WTC11 (cell line): ENCODE measurements at regions of chr1 and their contacts with region 1.

Region 1: DNA sequence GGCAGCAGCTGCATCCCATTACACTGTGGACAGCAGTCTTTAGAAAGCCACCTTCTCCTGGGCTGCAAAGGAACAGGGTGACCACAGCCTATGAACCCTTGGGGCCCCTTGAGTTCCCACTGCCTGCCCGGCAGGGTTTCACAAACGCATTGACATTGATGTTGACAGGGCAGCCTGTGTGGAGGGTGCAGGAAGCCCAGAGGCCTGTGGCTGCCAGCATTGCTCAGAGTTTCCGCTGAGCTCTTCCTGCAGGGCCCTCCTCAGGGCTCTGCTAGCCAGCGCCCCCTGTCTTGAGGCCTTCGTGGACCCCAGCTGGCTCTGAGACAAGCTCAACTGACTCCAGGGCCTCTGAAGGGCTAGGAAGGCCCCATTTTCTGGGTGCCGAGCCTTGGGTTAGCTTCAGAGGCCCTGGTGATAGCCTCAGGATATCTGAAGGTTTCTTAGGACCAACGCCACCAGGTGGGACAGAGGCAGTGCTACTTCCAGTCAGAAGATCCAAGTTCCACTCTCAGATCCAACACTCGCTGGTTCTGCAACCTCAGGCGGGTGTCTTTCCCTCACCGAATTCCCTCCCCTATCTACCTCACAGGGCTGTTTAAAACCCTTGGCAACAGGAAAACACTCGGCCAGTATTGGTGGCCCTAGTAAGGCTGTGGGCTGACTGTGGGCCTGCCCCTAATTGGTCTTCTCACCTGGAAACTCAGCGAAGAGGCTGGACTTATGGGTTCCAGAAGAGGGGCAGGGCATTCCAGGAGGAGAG is 27.2 kb upstream of the EPS8L3 start:
- DNase-seq: peak; percentile 53
- ATAC-seq: peak; percentile 19
- H3K4me3 Mint-ChIP-seq: no peak overlapping the region
- H3K27ac Mint-ChIP-seq: no peak overlapping the region
- H3K4me1 Mint-ChIP-seq: peaks cover 34% of the 10 kb centered on the region
- H3K27me3 Mint-ChIP-seq: peaks cover 4% of the 10 kb centered on the region; the same call in 1 of the 2 replicates
- CTCF ChIP-seq: no peak

Region 2: GRCh38 chr1:109732390-109732881 is 58.5 kb before region 1 on chr1:
- CTCF ChIA-PET with region 1: no interaction called
- POLR2A ChIA-PET with region 1: no interaction called
- DNase-seq: no peak
- ATAC-seq: no peak
- H3K4me3 Mint-ChIP-seq: no peak overlapping the region
- H3K27ac Mint-ChIP-seq: no peak overlapping the region
- H3K4me1 Mint-ChIP-seq: peaks cover 13% of the 10 kb centered on the region
- H3K27me3 Mint-ChIP-seq: peaks cover 37% of the 10 kb centered on the region
- CTCF ChIP-seq: no peak

Region 3: DNA sequence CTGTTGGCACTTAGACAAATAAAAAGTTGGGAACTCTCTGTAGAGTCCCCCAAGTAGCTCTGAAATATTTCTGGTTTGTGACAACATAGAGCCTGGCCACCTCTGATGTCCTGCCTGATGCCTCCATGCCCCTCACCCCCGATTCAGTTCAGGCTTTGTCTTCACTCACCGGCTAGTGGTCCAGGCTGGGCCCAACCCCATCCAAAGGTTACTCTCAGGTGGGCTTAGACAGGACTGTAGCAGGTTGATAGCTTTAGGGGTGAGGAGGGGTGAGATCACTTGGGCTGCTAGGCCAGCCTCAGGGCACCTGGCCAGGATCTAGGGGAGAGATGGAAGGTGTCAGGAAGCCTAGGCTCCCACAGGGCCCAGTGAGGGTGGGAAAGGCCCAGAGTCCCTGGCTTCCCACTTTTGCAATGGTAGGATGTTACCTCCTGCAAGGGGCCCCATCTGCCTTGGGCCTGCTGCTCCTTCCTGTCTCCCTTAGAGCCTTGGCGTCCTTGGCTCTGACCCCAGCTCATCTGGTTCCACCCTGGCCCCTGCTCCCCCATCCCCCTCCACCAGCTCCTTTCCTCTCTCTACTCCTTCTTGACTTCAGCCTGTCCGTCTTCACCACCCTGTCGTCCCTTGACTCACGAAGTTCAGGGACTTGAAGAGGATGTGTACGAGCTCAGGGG is 33.9 kb before region 1 on chr1:
- CTCF ChIA-PET with region 1: no interaction called
- POLR2A ChIA-PET with region 1: no interaction called
- DNase-seq: no peak
- ATAC-seq: no peak
- H3K4me3 Mint-ChIP-seq: no peak overlapping the region
- H3K27ac Mint-ChIP-seq: no peak overlapping the region
- H3K4me1 Mint-ChIP-seq: 0 out of 2 replicates have a peak, but pooled peaks cover 2% of the 10 kb centered on the region
- H3K27me3 Mint-ChIP-seq: no peaks in the 10 kb centered on the region; the same call in 1 of the 2 replicates
- CTCF ChIP-seq: no peak

Region 4: GRCh38 chr1:109773146-109773899 is 17.6 kb before region 1 on chr1:
- CTCF ChIA-PET with region 1: interaction called, 64 read pairs
- POLR2A ChIA-PET with region 1: no interaction called
- DNase-seq: peak; percentile 73
- ATAC-seq: peak; percentile 83
- H3K4me3 Mint-ChIP-seq: no peak overlapping the region
- H3K27ac Mint-ChIP-seq: no peak overlapping the region
- H3K4me1 Mint-ChIP-seq: peaks cover 5% of the 10 kb centered on the region
- H3K27me3 Mint-ChIP-seq: peaks cover 7% of the 10 kb centered on the region
- CTCF ChIP-seq: peak; percentile 38; the same call in 1 of the 2 replicates

Region 5: GRCh38 chr1:109827466-109827865 is 36.6 kb after region 1 on chr1:
- CTCF ChIA-PET with region 1: interaction called, 11 read pairs
- POLR2A ChIA-PET with region 1: no interaction called
- DNase-seq: no peak
- ATAC-seq: no peak
- H3K4me3 Mint-ChIP-seq: no peak overlapping the region
- H3K27ac Mint-ChIP-seq: no peak overlapping the region
- H3K4me1 Mint-ChIP-seq: peaks cover 22% of the 10 kb centered on the region
- H3K27me3 Mint-ChIP-seq: peaks cover 3% of the 10 kb centered on the region; the same call in 1 of the 2 replicates
- CTCF ChIP-seq: no peak

Region 6: DNA sequence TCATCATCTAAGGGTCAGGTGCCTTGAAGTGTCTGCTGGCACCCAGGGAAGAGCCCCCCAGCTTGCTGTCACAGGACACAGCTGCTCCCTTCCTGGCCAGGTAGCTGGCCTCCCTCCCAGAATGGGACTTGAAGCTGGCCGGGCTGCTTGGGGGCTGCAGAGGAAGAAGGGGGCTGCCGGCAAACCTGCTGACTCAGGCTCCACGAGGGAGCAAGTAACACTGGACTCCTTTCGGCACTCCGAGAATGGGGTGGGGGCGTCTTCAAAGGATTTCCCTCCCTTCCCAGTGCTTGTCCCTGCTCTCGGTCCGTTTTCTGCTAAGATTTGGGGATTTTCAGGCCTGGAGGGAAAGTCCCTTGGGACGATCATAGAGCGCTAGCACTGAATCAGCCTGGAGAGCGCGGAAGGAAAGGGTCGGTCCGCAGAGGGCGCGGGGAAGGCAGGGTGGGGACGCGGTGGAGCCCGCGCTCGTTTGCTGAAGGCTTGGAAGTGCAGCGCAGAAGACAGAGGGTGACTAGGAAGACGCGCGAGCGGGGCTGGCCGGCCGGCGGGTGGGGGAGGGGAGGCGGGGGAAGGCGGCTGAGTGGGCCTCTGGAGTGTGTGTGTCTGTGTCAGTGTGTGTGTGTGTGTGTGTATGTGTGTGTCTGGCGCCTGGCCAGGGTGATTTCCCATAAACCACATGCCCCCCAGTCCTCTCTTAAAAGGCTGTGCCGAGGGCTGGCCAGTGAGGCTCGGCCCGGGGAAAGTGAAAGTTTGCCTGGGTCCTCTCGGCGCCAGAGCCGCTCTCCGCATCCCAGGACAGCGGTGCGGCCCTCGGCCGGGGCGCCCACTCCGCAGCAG is 119.4 kb after region 1 on chr1 and contains the start of gene CSF1:
- CTCF ChIA-PET with region 1: interaction called, 13 read pairs
- POLR2A ChIA-PET with region 1: interaction called, 3 read pairs
- DNase-seq: peak; percentile 55
- ATAC-seq: peak; percentile 62
- H3K4me3 Mint-ChIP-seq: peak within 1 kb of the TSS; percentile 82
- H3K27ac Mint-ChIP-seq: no peak within 1 kb of the TSS
- H3K4me1 Mint-ChIP-seq: peaks cover 31% of the 10 kb centered on the region
- H3K27me3 Mint-ChIP-seq: peaks cover 56% of the 10 kb centered on the region
- CTCF ChIP-seq: no peak
- total RNA-seq, gene CSF1: 2.5 to 3.3 TPM (median 3.0 TPM) in 3 replicates

Region 7: DNA sequence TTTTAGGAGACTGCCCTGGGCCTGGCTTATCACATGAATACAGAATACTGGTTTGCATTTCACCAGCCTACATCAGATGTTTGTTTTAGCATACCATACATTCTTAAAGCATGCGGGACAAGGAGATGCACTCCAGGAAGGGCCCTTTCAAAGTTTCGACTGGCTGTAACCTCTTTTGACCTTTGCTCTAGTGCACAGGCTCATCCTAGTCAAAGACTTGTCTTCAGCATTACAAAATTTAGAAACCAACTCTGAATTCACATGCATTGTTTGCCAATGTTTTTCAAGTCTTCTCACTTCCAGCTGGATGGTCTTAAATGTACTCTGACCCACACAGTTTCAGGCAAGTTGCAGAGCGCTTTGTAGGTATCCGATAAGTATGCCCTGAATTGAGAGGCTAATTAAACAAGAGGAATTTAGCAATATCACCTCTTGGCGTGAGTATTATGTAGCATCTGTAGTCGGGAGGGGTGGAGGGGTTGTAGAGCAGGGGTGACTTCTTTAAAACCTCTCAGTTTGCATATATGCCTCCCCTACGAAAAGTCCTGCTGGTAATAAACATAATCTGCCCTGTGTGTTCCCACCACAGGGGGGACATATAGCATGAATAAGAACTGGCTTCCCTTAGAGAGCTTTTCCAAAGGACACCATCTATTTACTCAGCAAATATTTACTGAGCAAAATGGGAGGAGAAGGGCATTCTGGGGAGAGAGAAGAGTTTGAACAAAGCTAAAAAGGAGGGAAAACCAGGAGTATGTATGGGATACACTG is 169.2 kb after region 1 on chr1:
- CTCF ChIA-PET with region 1: interaction called, 13 read pairs
- POLR2A ChIA-PET with region 1: interaction called, 3 read pairs
- DNase-seq: peak; percentile 26
- ATAC-seq: peak; percentile 93
- H3K4me3 Mint-ChIP-seq: peak overlapping the region; percentile 11
- H3K27ac Mint-ChIP-seq: peak overlapping the region; percentile 50
- H3K4me1 Mint-ChIP-seq: peaks cover 36% of the 10 kb centered on the region
- H3K27me3 Mint-ChIP-seq: peaks cover 73% of the 10 kb centered on the region
- CTCF ChIP-seq: no peak